Heart right ventricle (tissue), 16 donors: ENCODE measurements at regions of chr15 and their contacts with region 1.

Region 1: DNA sequence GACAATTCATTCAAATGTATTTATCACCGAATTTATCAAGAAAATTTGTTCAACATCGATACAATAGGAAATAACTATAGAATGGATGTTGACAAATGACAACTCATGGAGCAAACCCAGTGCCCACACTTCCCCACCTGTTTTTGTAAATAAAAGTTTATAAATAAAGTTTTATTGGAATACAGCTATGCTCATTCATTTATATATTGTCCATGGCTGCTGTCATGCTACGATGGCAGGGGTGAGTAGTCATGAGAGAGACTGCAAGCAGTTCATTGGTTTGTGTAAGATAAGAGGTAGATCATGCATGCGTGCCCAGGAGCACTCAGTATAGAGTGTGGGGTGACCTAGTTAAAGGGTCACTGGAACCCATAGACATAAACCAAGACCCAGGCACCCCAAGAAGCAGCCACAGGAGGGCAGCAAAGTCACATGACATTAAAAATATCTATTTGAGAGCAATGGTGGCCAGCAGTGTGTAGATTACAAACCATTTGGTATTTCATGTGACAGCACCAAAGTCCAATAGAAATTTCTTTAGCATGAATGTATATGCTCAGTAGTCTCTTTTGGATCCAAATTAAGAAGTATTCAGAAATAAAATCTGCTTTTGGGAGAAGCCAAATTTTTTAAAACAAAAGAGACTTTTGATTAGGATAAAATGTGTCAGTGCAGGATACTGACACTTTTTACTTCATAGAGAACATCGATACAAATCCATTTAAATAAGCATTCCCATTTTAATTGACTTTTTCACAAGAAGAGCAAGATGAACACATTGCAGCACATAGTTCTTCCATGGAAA is 794.8 kb downstream of the MCTP2 start:
- DNase-seq: peak; percentile 32 to 54
- ATAC-seq: peak in 4 of 8 donors; percentile 31 to 53 (median 41)
- H3K4me3 ChIP-seq: no peak overlapping the region
- H3K27ac ChIP-seq: no peak overlapping the region
- H3K4me1 ChIP-seq: no peaks in the 10 kb centered on the region
- H3K27me3 ChIP-seq: no peaks in the 10 kb centered on the region
- CTCF ChIP-seq: peak in 8 of 9 donors; percentile 44 to 66 (median 56)

Region 2: DNA sequence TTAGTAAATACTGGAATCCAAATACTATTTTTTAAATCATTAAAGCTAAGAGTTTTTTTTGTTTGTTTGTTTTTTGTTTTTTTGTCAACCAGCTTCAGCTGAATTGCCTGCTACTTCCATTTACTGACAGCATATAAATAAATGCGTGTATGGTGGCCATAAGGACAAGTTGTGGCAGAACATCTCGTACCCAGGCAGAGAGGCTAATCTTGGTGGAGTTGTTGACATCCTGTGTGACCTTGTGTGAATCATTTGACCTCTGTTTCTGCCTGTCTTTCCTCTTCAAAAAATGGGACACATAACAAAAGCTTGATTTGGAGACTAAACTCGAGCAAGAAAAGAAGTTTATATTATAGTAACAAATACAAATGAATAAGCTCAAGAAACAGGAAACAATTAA is 60.5 kb before region 1 on chr15:
- intact Hi-C with region 1: no loop called
- DNase-seq: no peak
- ATAC-seq: peak in 2 of 8 donors; percentile 57 to 78
- H3K4me3 ChIP-seq: no peak overlapping the region
- H3K27ac ChIP-seq: peak overlapping the region in 1 of 10 donors; percentile 3
- H3K4me1 ChIP-seq: peaks cover 0 to 9% (median 0%) of the 10 kb centered on the region in 9 donors
- H3K27me3 ChIP-seq: no peaks in the 10 kb centered on the region
- CTCF ChIP-seq: no peak

Region 3: DNA sequence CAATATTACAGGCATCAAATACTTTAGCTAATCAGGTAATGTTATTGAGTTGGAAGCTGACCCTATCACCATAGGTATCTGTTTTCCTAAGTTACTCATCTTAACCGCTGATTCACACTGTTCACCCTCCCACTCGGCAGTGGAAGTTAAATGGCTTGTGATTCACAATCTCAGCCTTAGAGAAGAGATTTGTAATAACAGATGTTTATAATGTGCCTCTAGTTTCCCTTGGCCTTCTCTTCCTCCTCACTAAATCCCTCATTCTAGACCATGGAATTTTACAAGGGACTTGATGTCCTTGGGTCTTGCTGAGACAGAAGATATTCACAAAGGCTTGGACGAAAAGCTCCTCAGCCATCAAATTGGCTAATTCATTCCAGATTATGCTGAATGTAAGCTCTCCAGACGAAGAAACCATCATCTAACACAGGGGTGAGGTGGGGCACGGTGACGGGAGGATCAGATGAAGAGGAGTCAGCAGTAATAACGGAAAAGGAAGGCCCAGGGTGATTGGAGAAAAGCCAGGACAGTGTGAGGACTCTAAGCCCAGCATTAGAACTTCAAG is 136.9 kb after region 1 on chr15:
- intact Hi-C with region 1: loop called in 1 of 10 experiments (anchors 10 kb)
- DNase-seq: no peak
- ATAC-seq: peak in 2 of 8 donors; percentile 41 to 42
- H3K4me3 ChIP-seq: no peak overlapping the region
- H3K27ac ChIP-seq: peak overlapping the region in 4 of 10 donors; percentile 33 to 57 (median 39)
- H3K4me1 ChIP-seq: peaks cover 0 to 7% (median 0%) of the 10 kb centered on the region in 9 donors
- H3K27me3 ChIP-seq: no peaks in the 10 kb centered on the region
- CTCF ChIP-seq: no peak

Region 4: GRCh38 chr15:95291898-95292472 is 265.9 kb after region 1 on chr15:
- intact Hi-C with region 1: loop called in 1 of 10 experiments (anchors 5 kb)
- DNase-seq: no peak
- ATAC-seq: no peak
- H3K4me3 ChIP-seq: no peak overlapping the region
- H3K27ac ChIP-seq: no peak overlapping the region
- H3K4me1 ChIP-seq: peaks cover 0 to 32% (median 6%) of the 10 kb centered on the region in 9 donors
- H3K27me3 ChIP-seq: peaks cover 0 to 5% (median 2%) of the 10 kb centered on the region in 7 donors
- CTCF ChIP-seq: peak; percentile 37 to 72 (median 63)

Region 5: GRCh38 chr15:96345560-96346399 is 1319.7 kb after region 1 on chr15:
- intact Hi-C with region 1: loop called in 3 of 10 experiments (anchors 10 kb)
- DNase-seq: peak; percentile 69 to 82
- ATAC-seq: peak; percentile 58 to 85 (median 70)
- H3K4me3 ChIP-seq: peak overlapping the region; percentile 2 to 81 (median 56)
- H3K27ac ChIP-seq: peak overlapping the region; percentile 59 to 94 (median 90)
- H3K4me1 ChIP-seq: peaks cover 0 to 83% (median 36%) of the 10 kb centered on the region in 9 donors
- H3K27me3 ChIP-seq: peaks cover 4 to 100% (median 77%) of the 10 kb centered on the region in 7 donors
- CTCF ChIP-seq: peak; percentile 40 to 83 (median 65)